B cell (primary cell): ENCODE measurements at regions of chr15 and their contacts with region 1.

Region 1: DNA sequence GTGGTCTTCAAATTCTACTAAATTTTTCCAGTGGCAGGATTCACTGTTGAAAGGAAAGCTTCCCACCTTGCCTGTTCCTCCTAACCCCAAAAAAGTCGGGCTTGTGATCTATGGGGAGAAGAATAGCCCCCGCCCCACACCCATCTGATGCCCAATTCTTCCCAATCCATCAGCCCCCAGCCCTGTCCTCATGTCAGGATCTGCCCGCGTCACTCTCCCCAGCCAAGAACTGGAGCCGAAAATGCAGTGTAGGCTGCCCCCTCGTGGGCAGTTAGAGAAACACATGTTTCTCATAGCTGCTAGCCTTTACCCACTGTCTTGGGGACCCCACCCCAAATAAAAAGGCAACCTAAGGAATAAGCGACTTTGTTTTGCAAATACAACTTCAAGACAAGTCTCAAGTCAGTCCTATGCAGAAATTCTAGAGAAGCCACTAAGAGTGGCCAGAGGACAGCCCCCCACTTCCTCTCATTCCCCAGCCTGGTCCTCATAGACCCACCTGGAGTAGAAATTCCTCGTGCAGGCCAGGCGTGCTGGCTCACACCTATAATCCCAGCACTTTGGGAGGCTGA is 13.0 kb upstream of the CSK start:
- DNase-seq: peak; percentile 75
- ATAC-seq: peak; percentile 60
- H3K4me3 ChIP-seq: no peak overlapping the region
- H3K4me3 Mint-ChIP-seq: no peak overlapping the region
- H3K27ac ChIP-seq: no peak overlapping the region
- H3K27ac Mint-ChIP-seq: peak overlapping the region; percentile 18
- H3K4me1 ChIP-seq: peaks cover 34 to 41% of the 10 kb centered on the region in 2 donors
- H3K4me1 Mint-ChIP-seq: peaks cover 36% of the 10 kb centered on the region
- H3K27me3 ChIP-seq: no peaks in the 10 kb centered on the region
- H3K27me3 Mint-ChIP-seq: no peaks in the 10 kb centered on the region
- CTCF ChIP-seq: peak; percentile 84

Region 2: GRCh38 chr15:74615508-74616365 is 153.1 kb before region 1 on chr15 and contains the start of gene CLK3:
- CTCF ChIA-PET with region 1: interaction called, 19 read pairs
- POLR2A ChIA-PET with region 1: no interaction called
- intact Hi-C with region 1: no loop called
- DNase-seq: peak; percentile 96
- ATAC-seq: peak; percentile 80
- H3K4me3 ChIP-seq: peak within 1 kb of the TSS; percentile 50 to 100 (median 100)
- H3K4me3 Mint-ChIP-seq: peak within 1 kb of the TSS; percentile 92
- H3K27ac ChIP-seq: peak within 1 kb of the TSS; percentile 99
- H3K27ac Mint-ChIP-seq: peak within 1 kb of the TSS; percentile 97
- H3K4me1 ChIP-seq: peaks cover 18 to 39% of the 10 kb centered on the region in 2 donors
- H3K4me1 Mint-ChIP-seq: peaks cover 37% of the 10 kb centered on the region
- H3K27me3 ChIP-seq: no peaks in the 10 kb centered on the region
- H3K27me3 Mint-ChIP-seq: no peaks in the 10 kb centered on the region
- CTCF ChIP-seq: no peak
- total RNA-seq, gene CLK3: 164 and 176 TPM in 2 replicates

Region 3: GRCh38 chr15:74781431-74782258 is 12.8 kb after region 1 on chr15 and contains the start of gene CSK:
- CTCF ChIA-PET with region 1: interaction called, 2,548 read pairs
- POLR2A ChIA-PET with region 1: interaction called, 572 read pairs
- intact Hi-C with region 1: loop called (anchors 1 kb)
- DNase-seq: peak; percentile 91
- ATAC-seq: peak; percentile 53
- H3K4me3 ChIP-seq: peak within 1 kb of the TSS; percentile 86 to 99 (median 93)
- H3K4me3 Mint-ChIP-seq: peak within 1 kb of the TSS; percentile 93
- H3K27ac ChIP-seq: peak within 1 kb of the TSS; percentile 91 to 99
- H3K27ac Mint-ChIP-seq: peak within 1 kb of the TSS; percentile 98
- H3K4me1 ChIP-seq: peaks cover 67 to 84% of the 10 kb centered on the region in 2 donors
- H3K4me1 Mint-ChIP-seq: peaks cover 85% of the 10 kb centered on the region
- H3K27me3 ChIP-seq: no peaks in the 10 kb centered on the region
- H3K27me3 Mint-ChIP-seq: no peaks in the 10 kb centered on the region
- CTCF ChIP-seq: peak; percentile 59
- total RNA-seq, gene CSK: 325 and 343 TPM in 2 replicates

Region 4: GRCh38 chr15:74835307-74835823 is 66.5 kb after region 1 on chr15:
- CTCF ChIA-PET with region 1: interaction called, 98 read pairs
- POLR2A ChIA-PET with region 1: no interaction called
- intact Hi-C with region 1: loop called (anchors 1 kb)
- DNase-seq: peak; percentile 55
- ATAC-seq: peak; percentile 62
- H3K4me3 ChIP-seq: no peak overlapping the region
- H3K4me3 Mint-ChIP-seq: no peak overlapping the region
- H3K27ac ChIP-seq: no peak overlapping the region
- H3K27ac Mint-ChIP-seq: no peak overlapping the region
- H3K4me1 ChIP-seq: peaks cover 0 to 13% of the 10 kb centered on the region in 2 donors
- H3K4me1 Mint-ChIP-seq: peaks cover 8% of the 10 kb centered on the region
- H3K27me3 ChIP-seq: peaks cover 0 to under 1% (median 0%) of the 10 kb centered on the region in 4 experiments
- H3K27me3 Mint-ChIP-seq: no peaks in the 10 kb centered on the region
- CTCF ChIP-seq: peak; percentile 77

Region 5: GRCh38 chr15:74906446-74907162 is 137.7 kb after region 1 on chr15 and contains the start of gene FAM219B:
- CTCF ChIA-PET with region 1: interaction called, 108 read pairs
- POLR2A ChIA-PET with region 1: interaction called, 6 read pairs
- intact Hi-C with region 1: loop called (anchors 1 kb)
- DNase-seq: peak; percentile 86
- ATAC-seq: peak; percentile 90
- H3K4me3 ChIP-seq: peak within 1 kb of the TSS; percentile 73 to 89 (median 85)
- H3K4me3 Mint-ChIP-seq: peak within 1 kb of the TSS; percentile 98
- H3K27ac ChIP-seq: peak within 1 kb of the TSS; percentile 48 to 79
- H3K27ac Mint-ChIP-seq: peak within 1 kb of the TSS; percentile 98
- H3K4me1 ChIP-seq: peaks cover 19 to 23% of the 10 kb centered on the region in 2 donors
- H3K4me1 Mint-ChIP-seq: peaks cover 45% of the 10 kb centered on the region
- H3K27me3 ChIP-seq: no peaks in the 10 kb centered on the region
- H3K27me3 Mint-ChIP-seq: no peaks in the 10 kb centered on the region
- CTCF ChIP-seq: no peak
- total RNA-seq, gene FAM219B: 109 and 135 TPM in 2 replicates

Region 6: DNA sequence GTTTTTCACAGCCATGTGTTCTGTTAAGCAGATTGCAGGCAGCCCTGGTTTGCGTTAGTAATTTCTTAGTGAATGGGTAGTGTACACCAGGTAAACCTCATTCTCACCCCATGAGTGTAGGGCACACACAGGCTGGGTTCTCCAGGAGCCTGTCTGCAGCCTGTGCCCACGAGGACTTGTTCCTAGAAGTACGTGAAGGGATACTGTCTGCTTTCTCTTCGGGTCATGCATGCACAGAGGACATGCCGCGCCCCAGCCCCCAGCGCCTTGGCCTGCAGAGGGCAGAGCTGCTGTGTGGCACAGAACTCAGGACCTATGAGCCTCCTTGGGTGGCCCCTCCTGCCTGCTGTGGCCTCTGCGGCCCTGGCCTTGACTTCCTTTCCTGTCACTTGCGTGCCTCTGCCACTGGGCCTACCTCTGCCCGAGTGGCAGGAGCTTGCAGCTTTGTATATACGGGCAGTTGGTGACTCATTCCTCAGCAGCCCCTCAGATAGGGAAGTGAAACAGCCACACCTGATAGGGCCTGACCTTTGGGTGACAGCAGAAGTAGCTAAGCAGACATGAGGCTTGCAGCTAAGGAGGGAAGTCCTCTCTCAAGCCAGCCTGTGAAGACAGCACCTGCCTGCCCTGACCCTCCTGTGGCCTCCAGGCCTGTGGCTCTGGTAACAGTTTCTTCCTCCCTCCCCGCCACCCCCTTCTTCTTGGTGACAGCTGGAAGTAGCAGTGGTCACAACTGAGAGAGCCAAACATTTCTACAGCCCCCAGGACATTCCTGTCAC is 274.1 kb after region 1 on chr15:
- CTCF ChIA-PET with region 1: no interaction called
- POLR2A ChIA-PET with region 1: no interaction called
- intact Hi-C with region 1: no loop called
- DNase-seq: peak; percentile 94
- ATAC-seq: peak; percentile 89
- H3K4me3 ChIP-seq: no peak overlapping the region
- H3K4me3 Mint-ChIP-seq: peak overlapping the region; percentile 25
- H3K27ac ChIP-seq: peak overlapping the region; percentile 76 to 80
- H3K27ac Mint-ChIP-seq: peak overlapping the region; percentile 89
- H3K4me1 ChIP-seq: peaks cover 48 to 65% of the 10 kb centered on the region in 2 donors
- H3K4me1 Mint-ChIP-seq: peaks cover 57% of the 10 kb centered on the region
- H3K27me3 ChIP-seq: no peaks in the 10 kb centered on the region
- H3K27me3 Mint-ChIP-seq: no peaks in the 10 kb centered on the region
- CTCF ChIP-seq: peak; percentile 61